ENCODE measurements at regions of chr6 and their contacts with region 1.

Region 1: GRCh38 chr6:144284783-144285547 is at the start of gene UTRN:
- DNase-seq: peak; percentile 79
- ATAC-seq: peak; percentile 84
- H3K4me3 ChIP-seq: peak within 1 kb of the TSS; percentile 67
- H3K27ac ChIP-seq: peak within 1 kb of the TSS; percentile 84
- H3K4me1 ChIP-seq: no peaks in the 10 kb centered on the region; the same call in 1 of the 2 replicates
- H3K27me3 ChIP-seq: no peaks in the 10 kb centered on the region
- CTCF ChIP-seq: no peak
- POLR2A ChIP-seq: no peak
- RAD21 ChIP-seq: 0 out of 2 replicates have a peak, but pooled peaks have one; percentile 6
- total RNA-seq, gene UTRN: 83.5 and 91.4 TPM in 2 replicates

Region 2: GRCh38 chr6:144104898-144105487 is 180.0 kb before region 1 on chr6:
- CTCF ChIA-PET with region 1: interaction called, 3 read pairs
- POLR2A ChIA-PET with region 1: no interaction called
- dilution Hi-C with region 1: no loop called
- in situ Hi-C with region 1: no loop called
- intact Hi-C with region 1: loop called (anchors 1 kb)
- DNase-seq: peak; percentile 79
- ATAC-seq: peak; percentile 77
- H3K4me3 ChIP-seq: no peak overlapping the region
- H3K27ac ChIP-seq: no peak overlapping the region
- H3K4me1 ChIP-seq: no peaks in the 10 kb centered on the region
- H3K27me3 ChIP-seq: peaks cover 3% of the 10 kb centered on the region
- CTCF ChIP-seq: peak; percentile 86
- POLR2A ChIP-seq: no peak
- RAD21 ChIP-seq: peak; percentile 91

Region 3: DNA sequence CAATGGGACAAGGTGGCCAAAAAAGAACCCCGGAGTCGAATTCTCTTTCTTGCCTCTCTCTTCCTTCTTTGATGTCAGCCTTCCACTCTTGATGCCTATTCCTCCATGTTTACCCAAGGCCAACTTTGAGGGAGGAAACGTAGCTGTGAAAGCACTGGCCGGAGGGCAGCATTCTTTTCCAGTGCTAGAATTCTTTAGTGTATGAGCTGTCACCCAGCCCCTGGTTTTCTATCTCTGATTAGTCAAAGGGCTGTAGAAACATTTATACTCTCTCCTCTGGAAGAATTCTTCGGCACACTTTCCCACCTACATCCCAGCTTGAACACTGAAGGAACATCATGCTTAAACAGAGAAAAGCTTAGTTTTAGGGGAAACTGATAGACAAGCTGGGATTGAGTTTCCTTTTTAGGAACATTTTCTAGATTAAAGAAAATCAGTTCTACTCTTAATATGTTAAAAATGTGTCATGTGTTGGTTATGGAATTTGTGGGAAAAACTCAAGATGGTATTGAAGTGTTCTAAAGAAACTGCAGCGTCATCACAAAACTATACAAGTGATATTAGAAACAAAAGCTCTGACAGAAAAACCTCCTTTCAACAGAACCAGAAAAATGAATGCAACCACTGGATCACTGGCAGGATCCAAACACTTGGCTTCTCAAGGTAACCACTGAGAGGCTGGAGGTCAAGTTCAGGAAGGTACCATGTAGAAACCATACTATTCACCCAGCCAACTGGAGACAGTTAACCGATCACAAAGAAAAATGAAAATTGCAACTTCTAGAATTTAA is 20.5 kb before region 1 on chr6:
- CTCF ChIA-PET with region 1: interaction called, 4 read pairs
- POLR2A ChIA-PET with region 1: interaction called, 13 read pairs
- dilution Hi-C with region 1: no loop called
- in situ Hi-C with region 1: no loop called
- intact Hi-C with region 1: loop called (anchors 1 kb)
- DNase-seq: peak; percentile 90
- ATAC-seq: peak; percentile 87
- H3K4me3 ChIP-seq: no peak overlapping the region
- H3K27ac ChIP-seq: peak overlapping the region; percentile 87
- H3K4me1 ChIP-seq: peaks cover 11% of the 10 kb centered on the region
- H3K27me3 ChIP-seq: no peaks in the 10 kb centered on the region
- CTCF ChIP-seq: no peak
- POLR2A ChIP-seq: no peak
- RAD21 ChIP-seq: no peak

Region 4: DNA sequence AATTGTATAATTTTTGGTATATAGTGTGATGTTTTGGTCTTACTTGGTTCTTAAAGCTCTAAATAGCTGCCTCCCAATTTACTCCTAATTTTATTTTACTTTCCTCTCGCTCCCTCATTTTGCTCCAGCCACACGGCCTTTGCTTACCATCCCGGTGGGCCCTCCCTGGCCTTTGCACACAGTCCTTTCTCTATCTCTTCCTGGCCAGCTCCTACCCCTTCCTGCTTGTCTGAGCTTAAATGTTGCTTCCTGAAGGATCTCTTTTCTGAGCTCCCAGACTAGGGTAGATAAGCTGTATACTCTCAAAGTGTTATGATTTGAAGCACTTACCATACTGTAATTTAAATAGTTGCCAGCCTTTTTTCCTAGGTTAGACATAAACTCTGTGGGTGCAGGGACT is 121.8 kb after region 1 on chr6:
- CTCF ChIA-PET with region 1: no interaction called
- POLR2A ChIA-PET with region 1: interaction called, 26 read pairs
- dilution Hi-C with region 1: no loop called
- in situ Hi-C with region 1: no loop called
- intact Hi-C with region 1: no loop called
- DNase-seq: no peak
- ATAC-seq: no peak
- H3K4me3 ChIP-seq: no peak overlapping the region
- H3K27ac ChIP-seq: no peak overlapping the region
- H3K4me1 ChIP-seq: peaks cover 2% of the 10 kb centered on the region; the same call in 1 of the 2 replicates
- H3K27me3 ChIP-seq: no peaks in the 10 kb centered on the region
- CTCF ChIP-seq: no peak
- POLR2A ChIP-seq: no peak
- RAD21 ChIP-seq: no peak

Region 5: GRCh38 chr6:144482142-144482541 is 197.2 kb after region 1 on chr6:
- CTCF ChIA-PET with region 1: no interaction called
- POLR2A ChIA-PET with region 1: interaction called, 3 read pairs
- dilution Hi-C with region 1: no loop called
- in situ Hi-C with region 1: loop called (anchors 5 kb)
- intact Hi-C with region 1: loop called (anchors 1 kb)
- DNase-seq: peak; percentile 81
- ATAC-seq: peak; percentile 62
- H3K4me3 ChIP-seq: no peak overlapping the region
- H3K27ac ChIP-seq: no peak overlapping the region
- H3K4me1 ChIP-seq: peaks cover 4% of the 10 kb centered on the region
- H3K27me3 ChIP-seq: no peaks in the 10 kb centered on the region
- CTCF ChIP-seq: peak; percentile 69
- POLR2A ChIP-seq: no peak
- RAD21 ChIP-seq: peak; percentile 74

Region 6: GRCh38 chr6:144534180-144534579 is 249.2 kb after region 1 on chr6:
- CTCF ChIA-PET with region 1: no interaction called
- POLR2A ChIA-PET with region 1: no interaction called
- dilution Hi-C with region 1: no loop called
- in situ Hi-C with region 1: no loop called
- intact Hi-C with region 1: no loop called
- DNase-seq: peak; percentile 12
- ATAC-seq: peak; percentile 77
- H3K4me3 ChIP-seq: no peak overlapping the region
- H3K27ac ChIP-seq: no peak overlapping the region
- H3K4me1 ChIP-seq: no peaks in the 10 kb centered on the region
- H3K27me3 ChIP-seq: no peaks in the 10 kb centered on the region
- CTCF ChIP-seq: no peak
- POLR2A ChIP-seq: no peak
- RAD21 ChIP-seq: no peak